Dorsolateral prefrontal cortex (tissue), 120 donors: ENCODE measurements at regions of chr2 and their contacts with region 1.

Region 1: GRCh38 chr2:157596992-157597681 is 31.5 kb downstream of the ACVR1C start:
- DNase-seq: peak in 6 of 10 donors; percentile 18 to 58 (median 46)
- H3K4me3 ChIP-seq: peak overlapping the region in 54 of 59 donors; percentile 9 to 63 (median 46)
- H3K27ac ChIP-seq: peak overlapping the region in 6 of 59 donors; percentile 9 to 51 (median 28)
- H3K27me3 ChIP-seq: peaks cover 0 to 12% (median 0%) of the 10 kb centered on the region in 45 donors
- CTCF ChIP-seq: peak in 53 of 56 donors; percentile 30 to 73 (median 50)

Region 2: DNA sequence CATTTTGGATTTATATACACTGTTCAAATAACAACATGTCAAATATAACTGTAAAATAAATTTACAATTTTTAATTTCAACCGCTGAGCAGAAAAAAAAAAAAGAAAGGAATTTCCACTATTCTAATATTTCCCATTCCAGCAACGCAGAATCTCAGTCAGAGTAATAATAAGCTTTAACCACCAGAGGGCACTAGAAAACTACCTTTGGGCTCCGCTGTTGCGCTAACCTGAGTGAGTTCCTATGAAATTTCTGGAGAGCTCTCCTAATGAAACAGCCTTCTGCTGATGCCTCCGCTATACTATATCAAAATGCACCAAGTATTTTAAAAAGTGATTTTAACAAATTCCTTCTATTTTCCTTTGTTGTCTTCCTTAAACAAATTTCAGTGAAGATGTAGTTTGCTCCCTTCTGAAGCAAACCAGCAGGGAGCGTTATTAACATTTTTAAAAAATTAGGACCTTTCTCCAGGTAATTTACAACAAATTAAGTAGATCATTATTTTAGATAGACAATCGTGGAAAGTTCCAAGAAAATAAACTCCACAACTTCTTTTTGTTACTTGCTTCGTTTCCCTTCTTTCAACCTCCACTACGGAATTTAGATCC is 294.5 kb before region 1 on chr2:
- intact Hi-C with region 1: loop called in 1 of 2 experiments (anchors 10 kb)
- DNase-seq: peak in 1 of 10 donors; percentile 38
- H3K4me3 ChIP-seq: peak overlapping the region in 14 of 59 donors; percentile 8 to 52 (median 21)
- H3K27ac ChIP-seq: peak overlapping the region in 10 of 59 donors; percentile 14 to 80 (median 37)
- H3K27me3 ChIP-seq: peaks cover 0 to 8% (median 0%) of the 10 kb centered on the region in 45 donors
- CTCF ChIP-seq: peak; percentile 77 to 99 (median 90)

Region 3: GRCh38 chr2:157327621-157328500 is 269.3 kb before region 1 on chr2:
- intact Hi-C with region 1: loop called in 1 of 2 experiments (anchors 10 kb)
- DNase-seq: peak; percentile 36 to 95 (median 86)
- H3K4me3 ChIP-seq: peak overlapping the region in 57 of 59 donors; percentile 1 to 79 (median 58)
- H3K27ac ChIP-seq: peak overlapping the region; percentile 55 to 99 (median 94)
- H3K27me3 ChIP-seq: no peaks in the 10 kb centered on the region
- CTCF ChIP-seq: peak; percentile 60 to 97 (median 90)

Region 4: GRCh38 chr2:157497638-157498314 is 99.4 kb before region 1 on chr2:
- intact Hi-C with region 1: loop called (anchors 5 to 10 kb)
- DNase-seq: no peak
- H3K4me3 ChIP-seq: no peak overlapping the region
- H3K27ac ChIP-seq: no peak overlapping the region
- H3K27me3 ChIP-seq: no peaks in the 10 kb centered on the region
- CTCF ChIP-seq: peak; percentile 57 to 84 (median 73)

Region 5: DNA sequence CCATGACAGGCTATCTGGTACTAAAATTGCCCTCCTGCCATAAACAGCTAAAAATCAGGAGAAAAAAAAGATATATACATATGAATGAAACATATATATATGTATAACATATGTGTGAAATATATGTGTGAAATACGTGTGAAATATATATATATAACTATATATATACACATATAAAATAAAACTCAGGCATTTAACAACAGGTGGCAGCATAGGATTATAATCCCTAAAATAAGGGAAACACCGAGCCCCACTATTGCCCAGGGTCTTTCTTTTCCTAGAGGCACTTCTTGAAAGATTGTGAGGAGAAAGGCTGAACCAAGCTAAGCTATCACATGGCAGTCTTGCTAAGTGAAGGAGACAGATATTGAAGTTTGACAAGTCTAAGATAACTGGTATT is 87.4 kb before region 1 on chr2:
- intact Hi-C with region 1: loop called in 1 of 2 experiments (anchors 10 kb)
- DNase-seq: no peak
- H3K4me3 ChIP-seq: no peak overlapping the region
- H3K27ac ChIP-seq: no peak overlapping the region
- H3K27me3 ChIP-seq: no peaks in the 10 kb centered on the region
- CTCF ChIP-seq: peak in 50 of 56 donors; percentile 15 to 70 (median 44)

Region 6: DNA sequence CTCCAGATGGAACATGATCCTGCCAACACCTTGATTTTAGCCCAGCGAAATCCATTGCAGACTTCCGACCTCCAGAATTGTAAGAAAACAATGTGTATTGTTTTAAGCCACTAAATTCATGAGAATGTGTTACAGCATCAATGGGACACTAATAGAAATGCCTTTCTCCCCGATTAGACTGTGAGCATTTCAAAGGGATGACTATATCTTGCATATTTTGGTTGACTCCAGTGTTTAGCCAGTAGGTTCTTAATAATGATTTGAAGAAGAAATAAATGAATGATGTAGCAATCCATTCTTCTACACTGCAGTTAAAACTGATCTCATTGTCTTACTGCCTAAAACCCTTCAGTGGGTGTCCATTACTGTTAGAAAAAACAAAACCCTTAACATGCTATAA is 98.9 kb after region 1 on chr2:
- intact Hi-C with region 1: no loop called
- DNase-seq: no peak
- H3K4me3 ChIP-seq: no peak overlapping the region
- H3K27ac ChIP-seq: no peak overlapping the region
- H3K27me3 ChIP-seq: no peaks in the 10 kb centered on the region
- CTCF ChIP-seq: no peak